ENCODE measurements at regions of chr13 and their contacts with region 1.

Region 1: GRCh38 chr13:51697181-51697580 is 106.8 kb downstream of the DHRS12 start:
- DNase-seq: no peak
- ATAC-seq: no peak
- H3K4me3 ChIP-seq: no peak overlapping the region
- H3K4me3 Mint-ChIP-seq: no peak overlapping the region
- H3K27ac ChIP-seq: no peak overlapping the region
- H3K27ac Mint-ChIP-seq: no peak overlapping the region
- H3K4me1 ChIP-seq: no peaks in the 10 kb centered on the region
- H3K4me1 Mint-ChIP-seq: peaks cover 4% of the 10 kb centered on the region
- H3K27me3 ChIP-seq: no peaks in the 10 kb centered on the region
- H3K27me3 Mint-ChIP-seq: no peaks in the 10 kb centered on the region
- CTCF ChIP-seq: no peak

Region 2: GRCh38 chr13:51134763-51135365 is 562.3 kb before region 1 on chr13:
- CTCF ChIA-PET with region 1: no interaction called
- POLR2A ChIA-PET with region 1: no interaction called
- intact Hi-C with region 1: no loop called
- DNase-seq: no peak
- ATAC-seq: no peak
- H3K4me3 ChIP-seq: no peak overlapping the region
- H3K4me3 Mint-ChIP-seq: no peak overlapping the region
- H3K27ac ChIP-seq: no peak overlapping the region
- H3K27ac Mint-ChIP-seq: no peak overlapping the region
- H3K4me1 ChIP-seq: no peaks in the 10 kb centered on the region
- H3K4me1 Mint-ChIP-seq: no peaks in the 10 kb centered on the region
- H3K27me3 ChIP-seq: peaks cover 0 to 3% (median 0%) of the 10 kb centered on the region in 4 experiments
- H3K27me3 Mint-ChIP-seq: peaks cover 25% of the 10 kb centered on the region
- CTCF ChIP-seq: no peak

Region 3: DNA sequence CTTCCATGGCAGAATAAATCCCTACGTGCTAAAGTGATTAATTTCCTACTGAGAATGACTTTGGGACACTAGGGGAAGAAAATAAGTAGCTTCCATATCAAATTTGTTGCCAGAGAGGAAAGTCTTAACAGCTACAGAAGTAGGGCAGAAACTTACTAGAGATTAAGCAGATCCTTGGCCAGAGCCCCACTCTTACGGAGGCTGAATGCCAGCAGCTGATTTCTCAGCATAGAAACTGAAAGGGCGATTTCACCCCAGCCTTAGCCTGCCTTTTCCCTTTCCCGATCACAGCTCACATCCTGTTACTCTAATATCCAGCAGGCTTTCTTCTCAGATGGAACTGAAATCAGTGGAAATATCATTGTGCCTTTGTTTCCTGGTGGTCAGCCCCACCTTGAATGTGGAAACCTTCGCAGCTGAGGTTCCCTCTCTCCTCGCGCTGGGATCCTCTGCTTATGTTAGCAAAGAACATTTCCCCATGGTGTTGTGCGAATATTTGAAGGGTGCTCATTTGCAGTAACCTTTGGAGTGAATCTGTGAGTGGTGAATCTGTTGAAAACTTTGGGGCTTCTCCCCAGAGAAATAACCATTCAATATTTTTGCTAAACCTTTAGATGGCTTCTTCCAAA is 466.6 kb before region 1 on chr13:
- CTCF ChIA-PET with region 1: no interaction called
- POLR2A ChIA-PET with region 1: no interaction called
- intact Hi-C with region 1: no loop called
- DNase-seq: no peak
- ATAC-seq: no peak
- H3K4me3 ChIP-seq: no peak overlapping the region
- H3K4me3 Mint-ChIP-seq: peak overlapping the region; percentile 60
- H3K27ac ChIP-seq: no peak overlapping the region
- H3K27ac Mint-ChIP-seq: no peak overlapping the region
- H3K4me1 ChIP-seq: no peaks in the 10 kb centered on the region
- H3K4me1 Mint-ChIP-seq: no peaks in the 10 kb centered on the region
- H3K27me3 ChIP-seq: peaks cover 0 to 16% (median 3%) of the 10 kb centered on the region in 4 experiments
- H3K27me3 Mint-ChIP-seq: peaks cover 50% of the 10 kb centered on the region
- CTCF ChIP-seq: no peak

Region 4: GRCh38 chr13:51632591-51633362 is 64.4 kb before region 1 on chr13:
- CTCF ChIA-PET with region 1: no interaction called
- POLR2A ChIA-PET with region 1: no interaction called
- intact Hi-C with region 1: loop called (anchors 5 kb)
- DNase-seq: no peak
- ATAC-seq: no peak
- H3K4me3 ChIP-seq: no peak overlapping the region
- H3K4me3 Mint-ChIP-seq: no peak overlapping the region
- H3K27ac ChIP-seq: no peak overlapping the region
- H3K27ac Mint-ChIP-seq: no peak overlapping the region
- H3K4me1 ChIP-seq: peaks cover 17 to 20% of the 10 kb centered on the region in 2 donors
- H3K4me1 Mint-ChIP-seq: peaks cover 52% of the 10 kb centered on the region
- H3K27me3 ChIP-seq: no peaks in the 10 kb centered on the region
- H3K27me3 Mint-ChIP-seq: no peaks in the 10 kb centered on the region
- CTCF ChIP-seq: no peak

Region 5: GRCh38 chr13:53112525-53112924 is 1415.3 kb after region 1 on chr13:
- CTCF ChIA-PET with region 1: no interaction called
- POLR2A ChIA-PET with region 1: no interaction called
- intact Hi-C with region 1: no loop called
- DNase-seq: no peak
- ATAC-seq: no peak
- H3K4me3 ChIP-seq: no peak overlapping the region
- H3K4me3 Mint-ChIP-seq: no peak overlapping the region
- H3K27ac ChIP-seq: no peak overlapping the region
- H3K27ac Mint-ChIP-seq: no peak overlapping the region
- H3K4me1 ChIP-seq: no peaks in the 10 kb centered on the region
- H3K4me1 Mint-ChIP-seq: no peaks in the 10 kb centered on the region
- H3K27me3 ChIP-seq: no peaks in the 10 kb centered on the region
- H3K27me3 Mint-ChIP-seq: no peaks in the 10 kb centered on the region
- CTCF ChIP-seq: no peak

Region 6: GRCh38 chr13:53398051-53398450 is 1700.9 kb after region 1 on chr13:
- CTCF ChIA-PET with region 1: no interaction called
- POLR2A ChIA-PET with region 1: no interaction called
- intact Hi-C with region 1: no loop called
- DNase-seq: no peak
- ATAC-seq: no peak
- H3K4me3 ChIP-seq: no peak overlapping the region
- H3K4me3 Mint-ChIP-seq: no peak overlapping the region
- H3K27ac ChIP-seq: no peak overlapping the region
- H3K27ac Mint-ChIP-seq: no peak overlapping the region
- H3K4me1 ChIP-seq: no peaks in the 10 kb centered on the region
- H3K4me1 Mint-ChIP-seq: no peaks in the 10 kb centered on the region
- H3K27me3 ChIP-seq: no peaks in the 10 kb centered on the region
- H3K27me3 Mint-ChIP-seq: no peaks in the 10 kb centered on the region
- CTCF ChIP-seq: no peak

Measured in B cell (primary cell).